Transverse colon (tissue), 4 donors: ENCODE measurements at regions of chr6 and their contacts with region 1.

Region 1: GRCh38 chr6:153840039-153840850 is 198.8 kb upstream of the OPRM1 start:
- DNase-seq: no peak
- H3K4me3 ChIP-seq: no peak overlapping the region
- H3K27ac ChIP-seq: no peak overlapping the region
- H3K4me1 ChIP-seq: no peaks in the 10 kb centered on the region
- H3K27me3 ChIP-seq: no peaks in the 10 kb centered on the region
- CTCF ChIP-seq: no peak
- EP300 ChIP-seq: no peak
- POLR2A ChIP-seq: no peak

Region 2: GRCh38 chr6:154868143-154868594 is 1027.9 kb after region 1 on chr6:
- in situ Hi-C with region 1: no loop called
- intact Hi-C with region 1: loop called (anchors 5 kb)
- DNase-seq: no peak
- H3K4me3 ChIP-seq: no peak overlapping the region
- H3K27ac ChIP-seq: no peak overlapping the region
- H3K4me1 ChIP-seq: peaks cover 0 to 16% (median 4%) of the 10 kb centered on the region in 4 donors
- H3K27me3 ChIP-seq: no peaks in the 10 kb centered on the region
- CTCF ChIP-seq: peak; percentile 49 to 69 (median 61)
- EP300 ChIP-seq: no peak
- POLR2A ChIP-seq: no peak